Left cardiac atrium (tissue), 4 donors: ENCODE measurements at regions of chr11 and their contacts with region 1.

Region 1: DNA sequence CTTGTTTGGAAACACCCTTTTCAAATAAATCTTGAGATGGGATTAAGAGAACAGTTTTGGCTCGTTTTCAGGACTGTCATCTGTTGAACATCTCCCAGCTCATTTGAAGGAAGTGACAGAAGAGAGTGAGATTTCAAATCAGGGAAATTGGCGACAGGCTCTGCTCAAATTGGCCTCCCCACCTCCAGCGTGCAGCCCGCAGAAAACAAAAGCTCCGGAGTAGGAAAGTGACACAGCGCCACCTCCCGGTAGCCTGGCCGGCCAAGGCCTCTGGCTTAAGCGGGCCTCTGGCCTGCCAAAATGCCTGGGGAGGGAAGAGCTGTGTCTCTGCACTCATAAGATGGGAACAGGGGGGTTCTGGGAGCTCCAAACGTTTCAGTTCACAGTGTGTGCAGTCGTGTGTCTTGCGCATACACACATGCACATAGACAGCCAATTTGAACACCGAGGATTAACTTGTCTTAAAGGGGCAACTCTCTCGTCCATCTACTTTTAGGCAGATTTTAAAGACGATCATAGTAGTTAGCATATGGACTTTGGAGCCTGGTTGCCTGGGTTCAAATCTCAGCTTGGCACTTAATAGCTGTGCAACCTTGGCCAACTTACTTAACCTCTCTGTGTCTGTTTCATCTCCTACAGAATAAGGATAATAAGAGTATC is 132.7 kb upstream of the RCN1 start:
- DNase-seq: peak; percentile 77
- ATAC-seq: peak; percentile 71 to 84

Region 2: DNA sequence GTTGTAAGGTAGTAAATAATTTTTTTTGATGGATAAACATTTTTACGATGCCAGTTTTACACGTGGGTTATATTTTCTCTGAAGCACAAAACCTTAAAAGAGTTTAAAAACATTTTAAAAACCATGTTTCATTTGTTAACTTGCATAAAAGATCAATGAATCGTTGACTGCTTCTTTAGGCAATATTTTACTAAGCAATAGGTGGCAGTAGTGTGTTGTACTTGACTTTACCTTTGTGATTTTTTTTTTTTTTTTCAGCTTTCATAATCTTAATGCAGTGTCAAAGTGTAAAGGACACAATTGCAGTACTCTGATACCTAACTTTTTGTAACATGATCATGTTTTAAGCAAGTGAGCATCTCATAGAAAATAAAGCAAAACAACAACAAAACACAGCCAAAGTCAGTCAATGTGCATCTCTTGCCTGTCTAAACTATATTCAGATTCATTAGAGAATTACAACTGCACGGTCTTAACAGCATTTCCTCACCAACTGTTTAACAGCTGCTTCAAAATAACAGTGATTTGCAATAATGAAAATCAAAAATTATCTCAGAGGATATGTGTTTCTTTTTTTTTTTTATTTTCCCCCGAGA is 560.9 kb before region 1 on chr11:
- intact Hi-C with region 1: loop called in 1 of 2 experiments (anchors 10 kb)
- DNase-seq: no peak
- ATAC-seq: no peak

Region 3: DNA sequence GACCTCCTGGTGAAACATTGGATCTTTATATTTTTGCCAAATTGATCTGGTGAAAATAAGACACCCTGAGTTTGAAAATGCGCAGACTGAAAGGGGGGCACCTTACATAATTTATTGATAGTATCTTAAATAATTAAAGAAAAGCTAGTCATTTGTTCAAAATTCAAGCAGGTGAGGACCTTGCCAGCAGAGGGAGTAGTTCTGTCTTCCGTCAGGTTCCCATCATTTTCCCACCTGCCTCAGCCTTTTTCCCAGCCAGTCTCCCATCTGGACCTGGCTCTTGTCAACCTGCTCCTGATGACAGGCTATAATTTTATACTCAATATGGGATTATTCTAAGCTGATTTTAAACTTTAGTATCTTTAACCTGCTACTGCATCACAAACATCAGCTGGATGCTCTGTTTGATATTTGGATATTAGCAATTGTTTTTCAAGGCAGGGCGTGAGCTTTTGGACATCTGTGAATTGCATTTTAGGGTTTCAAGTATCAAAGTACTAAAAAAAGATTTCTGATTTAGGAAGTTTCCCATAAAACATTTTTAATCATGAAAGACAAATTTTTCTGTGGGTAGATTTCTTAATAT is 316.6 kb before region 1 on chr11:
- intact Hi-C with region 1: loop called in 1 of 2 experiments (anchors 5 kb)
- DNase-seq: no peak
- ATAC-seq: no peak